Aorta (tissue), 5 donors: ENCODE measurements at regions of chr2 and their contacts with region 1.

Region 1: GRCh38 chr2:152407204-152407721 is 72.3 kb downstream of the FMNL2 start:
- DNase-seq: peak; percentile 73 to 79
- ATAC-seq: peak; percentile 64
- H3K4me3 ChIP-seq: no peak overlapping the region
- H3K27ac ChIP-seq: peak overlapping the region in 1 of 2 donors; percentile 32
- H3K4me1 ChIP-seq: peaks cover 3 to 19% of the 10 kb centered on the region in 2 donors
- H3K27me3 ChIP-seq: no peaks in the 10 kb centered on the region

Region 2: GRCh38 chr2:151945191-151945590 is 462.1 kb before region 1 on chr2:
- intact Hi-C with region 1: no loop called
- DNase-seq: no peak
- ATAC-seq: no peak
- H3K4me3 ChIP-seq: no peak overlapping the region
- H3K27ac ChIP-seq: peak overlapping the region in 1 of 2 donors; percentile 33
- H3K4me1 ChIP-seq: peaks cover 0 to 12% of the 10 kb centered on the region in 2 donors
- H3K27me3 ChIP-seq: no peaks in the 10 kb centered on the region

Region 3: DNA sequence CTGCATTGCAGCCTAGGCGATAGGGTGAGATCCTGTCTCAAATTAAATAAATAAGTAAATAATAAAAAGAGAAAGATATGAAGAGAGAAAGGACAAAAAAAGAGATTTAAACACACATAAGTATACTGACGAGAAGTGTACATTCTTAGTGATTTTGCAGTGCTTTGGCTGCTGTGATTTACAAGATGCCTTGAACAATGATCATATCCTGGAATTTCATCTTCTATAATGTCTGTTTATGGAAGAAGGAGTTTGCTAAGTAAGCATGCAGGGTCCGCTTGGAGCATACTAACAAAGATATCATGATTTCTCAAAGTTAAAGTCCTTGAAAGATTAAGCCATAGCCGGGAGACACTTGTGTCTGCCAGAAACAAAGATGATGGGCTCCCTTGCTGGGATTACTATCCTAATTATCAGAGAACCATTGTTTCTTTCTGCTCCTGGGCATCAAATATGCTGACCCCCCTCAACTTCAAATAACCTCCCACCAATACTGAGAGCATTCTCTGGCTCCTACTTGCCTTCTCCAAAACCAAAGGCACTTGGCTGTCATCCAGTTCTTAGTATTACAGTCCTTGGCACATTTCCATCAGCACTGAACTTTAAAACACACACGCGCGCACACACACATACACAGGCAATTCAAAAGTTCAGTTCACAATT is 184.2 kb before region 1 on chr2:
- intact Hi-C with region 1: loop called in 1 of 2 experiments (anchors 10 kb)
- DNase-seq: peak in 1 of 2 donors; percentile 72
- ATAC-seq: peak; percentile 67
- H3K4me3 ChIP-seq: no peak overlapping the region
- H3K27ac ChIP-seq: no peak overlapping the region
- H3K4me1 ChIP-seq: peaks cover 5 to 6% of the 10 kb centered on the region in 2 donors
- H3K27me3 ChIP-seq: no peaks in the 10 kb centered on the region

Region 4: DNA sequence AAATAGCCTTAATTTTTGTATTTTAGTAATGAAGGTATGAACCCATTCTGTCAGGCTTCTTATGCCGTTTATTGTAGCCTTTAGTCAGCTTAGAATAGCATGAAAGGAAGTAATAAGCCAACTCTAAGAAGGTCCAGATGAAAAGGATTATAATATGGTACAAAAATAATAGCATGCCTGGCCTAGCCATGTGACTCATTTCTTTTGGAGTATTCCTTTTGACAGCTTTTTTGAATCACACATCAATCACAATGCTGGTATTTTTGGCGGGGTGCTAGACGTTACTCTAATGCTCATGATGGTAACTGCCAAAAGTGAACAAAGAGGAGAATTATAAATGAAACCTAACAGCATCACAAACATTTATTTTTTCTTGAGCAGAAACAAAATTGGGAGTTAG is 52.4 kb before region 1 on chr2:
- intact Hi-C with region 1: loop called in 1 of 2 experiments (anchors 5 kb)
- DNase-seq: no peak
- ATAC-seq: no peak
- H3K4me3 ChIP-seq: no peak overlapping the region
- H3K27ac ChIP-seq: no peak overlapping the region
- H3K4me1 ChIP-seq: peaks cover 0 to 6% of the 10 kb centered on the region in 2 donors
- H3K27me3 ChIP-seq: no peaks in the 10 kb centered on the region

Region 5: GRCh38 chr2:152537081-152537651 is 129.9 kb after region 1 on chr2:
- intact Hi-C with region 1: loop called in 1 of 2 experiments (anchors 10 kb)
- DNase-seq: no peak
- ATAC-seq: no peak
- H3K4me3 ChIP-seq: no peak overlapping the region
- H3K27ac ChIP-seq: no peak overlapping the region
- H3K4me1 ChIP-seq: peaks cover 0 to 15% of the 10 kb centered on the region in 2 donors
- H3K27me3 ChIP-seq: no peaks in the 10 kb centered on the region